CD8-positive, alpha-beta T cell (primary cell): ENCODE measurements at regions of chr6 and their contacts with region 1.

Region 1: DNA sequence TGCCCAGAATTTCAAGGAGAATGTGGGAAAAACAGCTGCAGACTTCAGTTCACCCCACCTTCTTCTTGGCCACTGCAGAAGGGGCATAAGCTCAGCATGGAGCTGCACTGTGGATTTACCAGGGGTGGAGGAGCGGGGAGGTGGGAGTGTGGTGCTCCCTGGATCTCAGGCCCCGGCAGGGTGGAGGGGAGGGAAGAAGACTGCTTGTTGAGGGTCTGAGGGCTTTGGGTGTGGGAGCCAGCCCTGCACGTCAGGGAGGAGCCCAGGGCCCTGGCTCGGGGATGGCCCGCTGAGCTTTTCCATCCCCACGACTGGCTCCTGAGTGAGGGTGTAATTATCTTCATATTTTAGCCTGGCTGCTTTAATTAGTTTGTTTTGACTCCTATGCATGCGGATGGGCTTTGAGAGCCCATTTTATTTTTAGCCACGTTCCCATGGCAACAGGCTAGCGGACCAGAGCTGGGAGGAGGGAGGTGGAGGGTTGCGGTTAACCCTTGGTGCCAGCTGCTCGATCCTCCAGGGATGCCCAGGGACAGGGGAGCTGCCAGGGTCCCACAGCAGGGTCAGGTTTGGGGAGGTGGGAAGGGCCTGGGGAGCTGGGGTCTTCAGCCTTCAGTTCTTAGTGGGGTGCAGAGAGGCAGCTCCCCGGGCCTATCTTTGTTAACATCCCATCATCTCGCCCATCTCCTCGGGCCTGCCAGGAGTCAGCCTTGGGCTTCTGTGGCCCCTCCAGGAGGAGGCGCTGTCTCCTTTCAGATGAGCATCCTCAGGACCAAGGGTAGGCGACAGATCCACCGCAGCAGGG is 68.2 kb downstream of the RAB44 start:
- DNase-seq: peak; percentile 65 to 87 (median 80)
- ATAC-seq: peak; percentile 95
- H3K4me3 ChIP-seq: no peak overlapping the region
- H3K4me3 Mint-ChIP-seq: no peak overlapping the region
- H3K27ac ChIP-seq: no peak overlapping the region
- H3K27ac Mint-ChIP-seq: no peak overlapping the region
- H3K4me1 ChIP-seq: peaks cover 42% of the 10 kb centered on the region
- H3K4me1 Mint-ChIP-seq: peaks cover 33% of the 10 kb centered on the region
- H3K27me3 ChIP-seq: no peaks in the 10 kb centered on the region
- H3K27me3 Mint-ChIP-seq: no peaks in the 10 kb centered on the region
- CTCF ChIP-seq: peak; percentile 75

Region 2: DNA sequence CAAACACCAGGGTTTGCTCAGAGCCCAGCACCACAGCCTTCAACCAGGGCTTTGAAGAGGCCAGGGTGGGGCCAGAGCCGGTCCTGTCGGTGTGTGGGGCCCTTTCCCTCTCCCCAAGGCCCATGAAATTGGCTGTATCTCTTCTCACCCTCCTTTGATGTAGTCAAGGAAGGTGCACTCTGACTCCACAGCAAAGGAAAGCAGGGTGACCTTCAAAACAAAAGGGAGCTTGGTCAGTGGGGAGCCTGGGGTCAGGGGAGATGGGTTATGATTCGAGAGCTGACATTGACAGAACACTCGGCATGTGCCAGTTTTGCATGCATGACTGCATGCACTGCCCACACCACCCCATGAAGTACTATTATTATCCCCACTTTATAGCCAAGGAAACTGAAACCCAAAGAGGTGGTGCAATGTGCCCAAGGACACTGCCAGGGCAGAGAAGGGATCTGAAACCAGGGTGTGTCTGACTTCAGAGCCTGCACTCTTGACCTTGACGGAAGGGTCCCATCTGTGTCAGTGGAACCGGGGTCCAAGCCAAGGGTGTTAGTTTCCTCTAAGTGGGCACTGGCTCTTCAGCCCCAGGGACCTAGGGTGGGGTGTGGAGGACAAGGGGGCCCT is 12.8 kb before region 1 on chr6:
- CTCF ChIA-PET with region 1: interaction called, 46 read pairs
- POLR2A ChIA-PET with region 1: no interaction called
- intact Hi-C with region 1: no loop called
- DNase-seq: no peak
- ATAC-seq: no peak
- H3K4me3 ChIP-seq: no peak overlapping the region
- H3K4me3 Mint-ChIP-seq: no peak overlapping the region
- H3K27ac ChIP-seq: no peak overlapping the region
- H3K27ac Mint-ChIP-seq: no peak overlapping the region
- H3K4me1 ChIP-seq: peaks cover 9% of the 10 kb centered on the region
- H3K4me1 Mint-ChIP-seq: peaks cover 29% of the 10 kb centered on the region
- H3K27me3 ChIP-seq: no peaks in the 10 kb centered on the region
- H3K27me3 Mint-ChIP-seq: no peaks in the 10 kb centered on the region
- CTCF ChIP-seq: no peak

Region 3: GRCh38 chr6:36780442-36781177 is 14.8 kb after region 1 on chr6:
- CTCF ChIA-PET with region 1: interaction called, 189 read pairs
- POLR2A ChIA-PET with region 1: interaction called, 4 read pairs
- intact Hi-C with region 1: loop called (anchors 1 kb)
- DNase-seq: no peak
- ATAC-seq: no peak
- H3K4me3 ChIP-seq: no peak overlapping the region
- H3K4me3 Mint-ChIP-seq: no peak overlapping the region
- H3K27ac ChIP-seq: no peak overlapping the region
- H3K27ac Mint-ChIP-seq: peak overlapping the region; percentile 4
- H3K4me1 ChIP-seq: no peaks in the 10 kb centered on the region
- H3K4me1 Mint-ChIP-seq: peaks cover 2% of the 10 kb centered on the region
- H3K27me3 ChIP-seq: no peaks in the 10 kb centered on the region
- H3K27me3 Mint-ChIP-seq: peaks cover 2% of the 10 kb centered on the region
- CTCF ChIP-seq: no peak

Region 4: GRCh38 chr6:36851149-36851614 is 85.4 kb after region 1 on chr6:
- CTCF ChIA-PET with region 1: interaction called, 56 read pairs
- POLR2A ChIA-PET with region 1: no interaction called
- intact Hi-C with region 1: loop called (anchors 1 kb)
- DNase-seq: peak in 4 of 9 experiments; percentile 26 to 61 (median 40)
- ATAC-seq: no peak
- H3K4me3 ChIP-seq: no peak overlapping the region
- H3K4me3 Mint-ChIP-seq: no peak overlapping the region
- H3K27ac ChIP-seq: no peak overlapping the region
- H3K27ac Mint-ChIP-seq: no peak overlapping the region
- H3K4me1 ChIP-seq: no peaks in the 10 kb centered on the region
- H3K4me1 Mint-ChIP-seq: peaks cover 2% of the 10 kb centered on the region
- H3K27me3 ChIP-seq: no peaks in the 10 kb centered on the region
- H3K27me3 Mint-ChIP-seq: no peaks in the 10 kb centered on the region
- CTCF ChIP-seq: peak; percentile 67